ENCODE measurements at regions of chr1 and their contacts with region 1.

Region 1: DNA sequence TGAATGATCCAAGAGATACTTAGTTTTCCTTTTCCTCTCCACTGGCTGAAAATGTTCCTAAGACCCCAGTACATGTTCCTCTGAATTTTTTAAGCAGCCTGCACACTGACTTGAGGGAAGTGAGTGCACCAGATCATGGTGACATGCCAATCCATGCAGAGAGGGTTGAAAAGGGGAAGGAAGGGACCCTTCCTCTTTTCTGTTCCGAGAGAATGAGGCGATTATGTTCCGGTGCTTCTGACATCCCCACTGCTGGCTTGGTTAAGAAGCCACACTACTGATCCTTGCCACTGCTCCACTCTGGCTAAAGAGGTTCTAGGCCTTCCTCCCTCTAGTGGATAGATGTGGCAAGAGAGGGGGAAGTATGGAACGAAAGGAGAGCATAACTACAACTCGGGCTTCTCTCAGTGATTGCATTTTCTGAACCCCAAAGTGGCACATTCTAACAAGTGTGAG is 1.8 kb upstream of the CYB5R1 start:
- DNase-seq: peak in 4 of 9 experiments; percentile 14 to 64 (median 40)
- ATAC-seq: peak; percentile 19
- H3K4me3 ChIP-seq: no peak overlapping the region
- H3K4me3 Mint-ChIP-seq: peak overlapping the region; percentile 49
- H3K27ac ChIP-seq: no peak overlapping the region
- H3K27ac Mint-ChIP-seq: no peak overlapping the region
- H3K4me1 ChIP-seq: peaks cover 24% of the 10 kb centered on the region
- H3K4me1 Mint-ChIP-seq: peaks cover 32% of the 10 kb centered on the region
- H3K27me3 ChIP-seq: no peaks in the 10 kb centered on the region
- H3K27me3 Mint-ChIP-seq: no peaks in the 10 kb centered on the region
- CTCF ChIP-seq: peak; percentile 28

Region 2: GRCh38 chr1:202810615-202811295 is 158.1 kb before region 1 on chr1 and contains the start of gene PCAT6:
- CTCF ChIA-PET with region 1: no interaction called
- POLR2A ChIA-PET with region 1: no interaction called
- intact Hi-C with region 1: loop called in 1 of 2 experiments (anchors 2 kb)
- DNase-seq: peak; percentile 67 to 93 (median 84)
- ATAC-seq: peak; percentile 67
- H3K4me3 ChIP-seq: peak within 1 kb of the TSS; percentile 80 to 94
- H3K4me3 Mint-ChIP-seq: peak within 1 kb of the TSS; percentile 88
- H3K27ac ChIP-seq: peak within 1 kb of the TSS; percentile 51 to 72
- H3K27ac Mint-ChIP-seq: peak within 1 kb of the TSS; percentile 90
- H3K4me1 ChIP-seq: peaks cover 20% of the 10 kb centered on the region
- H3K4me1 Mint-ChIP-seq: peaks cover 34% of the 10 kb centered on the region
- H3K27me3 ChIP-seq: no peaks in the 10 kb centered on the region
- H3K27me3 Mint-ChIP-seq: no peaks in the 10 kb centered on the region
- CTCF ChIP-seq: no peak
- total RNA-seq, gene PCAT6: 0.92 to 1.6 TPM

Region 3: GRCh38 chr1:202957733-202958543 is 10.9 kb before region 1 on chr1 and contains the start of gene ADIPOR1:
- CTCF ChIA-PET with region 1: interaction called, 3 read pairs
- POLR2A ChIA-PET with region 1: no interaction called
- intact Hi-C with region 1: loop called (anchors 1 kb)
- DNase-seq: peak; percentile 89 to 96 (median 94)
- ATAC-seq: peak; percentile 97
- H3K4me3 ChIP-seq: peak within 1 kb of the TSS; percentile 89 to 93
- H3K4me3 Mint-ChIP-seq: peak within 1 kb of the TSS; percentile 81
- H3K27ac ChIP-seq: peak within 1 kb of the TSS; percentile 89 to 94
- H3K27ac Mint-ChIP-seq: peak within 1 kb of the TSS; percentile 92
- H3K4me1 ChIP-seq: peaks cover 36% of the 10 kb centered on the region
- H3K4me1 Mint-ChIP-seq: peaks cover 46% of the 10 kb centered on the region
- H3K27me3 ChIP-seq: no peaks in the 10 kb centered on the region
- H3K27me3 Mint-ChIP-seq: no peaks in the 10 kb centered on the region
- CTCF ChIP-seq: no peak
- total RNA-seq, gene ADIPOR1: 106 to 117 TPM

Region 4: DNA sequence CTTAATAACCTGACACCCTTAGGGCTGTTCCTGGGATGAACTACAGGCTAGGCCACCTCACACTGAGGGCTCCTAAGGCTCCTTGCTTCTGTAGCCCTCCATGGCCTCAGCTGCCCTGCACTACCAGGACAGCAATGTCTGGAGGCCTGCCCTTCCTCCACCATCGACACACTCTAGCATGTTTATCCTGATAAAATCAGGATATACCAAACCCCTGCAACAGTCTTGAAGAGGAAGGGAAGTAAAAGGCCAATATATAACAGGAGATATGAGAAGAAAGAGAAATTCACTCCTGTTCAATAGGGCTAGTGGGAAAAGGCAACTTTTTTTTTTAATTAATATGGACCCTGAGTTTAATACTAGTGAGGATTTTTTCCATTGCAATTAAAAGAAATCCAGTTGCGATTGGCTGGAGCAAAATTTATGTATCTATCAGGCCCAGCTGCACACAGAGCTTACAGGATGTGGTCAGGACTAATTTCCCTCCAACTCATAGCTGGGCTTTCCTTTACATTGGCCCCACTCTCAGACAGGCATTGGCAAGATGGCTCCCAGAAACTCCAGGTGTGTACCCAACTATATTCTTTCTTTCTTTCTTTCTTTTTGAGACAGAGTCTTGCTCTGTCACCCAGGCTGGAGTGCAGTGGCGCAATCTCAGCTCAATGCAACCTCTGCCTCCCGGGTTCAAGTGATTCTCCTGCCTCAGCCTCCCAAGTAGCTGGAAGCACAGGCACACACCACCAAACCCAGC is 644.2 kb after region 1 on chr1:
- CTCF ChIA-PET with region 1: no interaction called
- POLR2A ChIA-PET with region 1: no interaction called
- intact Hi-C with region 1: no loop called
- DNase-seq: peak in 2 of 9 experiments; percentile 37 to 57
- ATAC-seq: peak; percentile 49
- H3K4me3 ChIP-seq: no peak overlapping the region
- H3K4me3 Mint-ChIP-seq: no peak overlapping the region
- H3K27ac ChIP-seq: no peak overlapping the region
- H3K27ac Mint-ChIP-seq: no peak overlapping the region
- H3K4me1 ChIP-seq: peaks cover 10% of the 10 kb centered on the region
- H3K4me1 Mint-ChIP-seq: peaks cover 30% of the 10 kb centered on the region
- H3K27me3 ChIP-seq: no peaks in the 10 kb centered on the region
- H3K27me3 Mint-ChIP-seq: no peaks in the 10 kb centered on the region
- CTCF ChIP-seq: no peak

Measured in CD8-positive, alpha-beta T cell (primary cell).